ENCODE measurements at regions of chr5 and their contacts with region 1.

Region 1: DNA sequence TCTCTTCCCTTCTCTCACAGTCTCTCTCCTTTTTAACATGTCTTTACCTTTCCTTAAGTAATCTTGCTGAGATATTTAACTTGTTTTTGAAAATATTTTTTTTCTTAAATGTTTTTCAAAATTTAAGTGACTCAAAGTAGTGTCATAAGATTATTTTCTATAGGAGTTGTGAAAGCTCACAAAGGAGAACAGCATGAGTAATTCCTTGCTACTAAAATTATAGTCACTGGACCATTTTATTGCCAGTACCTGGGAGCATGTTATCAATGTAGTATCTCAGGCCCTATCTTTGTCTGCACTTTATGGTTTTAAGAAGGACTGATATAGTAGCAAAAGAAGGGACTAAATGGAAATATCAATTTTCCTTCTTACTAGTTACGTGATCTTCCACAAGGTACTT is 181.9 kb downstream of the TMEM232 start:
- DNase-seq: no peak
- H3K4me3 ChIP-seq: no peak overlapping the region
- H3K27ac ChIP-seq: no peak overlapping the region
- H3K4me1 ChIP-seq: no peaks in the 10 kb centered on the region
- H3K27me3 ChIP-seq: no peaks in the 10 kb centered on the region
- CTCF ChIP-seq: no peak

Region 2: DNA sequence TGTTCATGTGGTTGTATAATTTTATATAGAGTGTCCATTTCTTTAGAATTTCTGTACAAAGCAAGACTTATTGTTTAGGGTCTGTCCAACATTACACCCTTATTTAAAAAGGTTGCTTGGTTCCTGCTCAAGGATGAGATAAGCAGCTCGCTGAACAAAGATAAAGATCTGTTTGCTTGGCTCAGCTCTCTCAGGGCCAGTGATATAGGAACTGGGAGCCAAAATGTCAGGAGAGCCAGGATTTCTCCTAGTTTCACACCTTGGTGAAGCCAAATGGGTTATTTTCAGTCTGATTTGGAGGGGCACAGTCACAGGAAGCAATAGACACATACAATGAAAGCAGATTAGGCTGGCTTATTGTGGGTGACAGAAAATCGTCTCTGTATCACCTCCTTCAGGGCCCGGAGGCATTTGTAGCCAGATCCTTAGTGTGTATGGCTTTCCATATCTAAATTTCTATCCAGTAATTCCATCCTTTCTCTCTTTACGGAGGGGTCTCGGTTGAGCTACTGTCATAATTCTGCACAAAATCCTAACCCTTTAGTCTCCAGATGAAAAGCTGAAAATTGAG is 214.6 kb before region 1 on chr5:
- CTCF ChIA-PET with region 1: no interaction called
- POLR2A ChIA-PET with region 1: no interaction called
- intact Hi-C with region 1: no loop called
- DNase-seq: no peak
- H3K4me3 ChIP-seq: no peak overlapping the region
- H3K27ac ChIP-seq: no peak overlapping the region
- H3K4me1 ChIP-seq: no peaks in the 10 kb centered on the region
- H3K27me3 ChIP-seq: no peaks in the 10 kb centered on the region
- CTCF ChIP-seq: no peak

Region 3: DNA sequence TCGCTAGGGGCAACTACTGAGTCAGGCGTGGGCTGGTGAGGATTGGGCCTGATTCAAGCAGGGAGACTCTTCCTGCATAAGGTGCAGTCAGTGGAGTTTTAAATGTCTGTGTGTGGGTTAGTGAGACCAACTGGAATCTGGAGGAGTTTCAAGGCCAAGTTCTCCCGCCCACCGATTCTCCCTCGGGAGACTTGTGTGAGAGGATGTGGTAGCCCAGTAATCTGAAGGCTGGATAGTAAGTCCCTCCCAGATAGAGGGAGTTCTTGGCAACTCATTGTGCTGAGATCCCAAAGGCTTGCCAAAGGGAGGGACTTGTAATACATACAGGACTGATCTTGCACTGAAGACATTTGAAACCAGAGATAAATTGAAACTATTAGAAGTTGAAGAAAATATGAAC is 599.3 kb after region 1 on chr5:
- CTCF ChIA-PET with region 1: no interaction called
- POLR2A ChIA-PET with region 1: no interaction called
- intact Hi-C with region 1: loop called (anchors 5 kb)
- DNase-seq: no peak
- H3K4me3 ChIP-seq: no peak overlapping the region
- H3K27ac ChIP-seq: no peak overlapping the region
- H3K4me1 ChIP-seq: no peaks in the 10 kb centered on the region
- H3K27me3 ChIP-seq: no peaks in the 10 kb centered on the region
- CTCF ChIP-seq: no peak

Measured in PC-9 (cell line).